ENCODE measurements at regions of chr10 and their contacts with region 1.

Region 1: GRCh38 chr10:3043512-3044368 is 23.6 kb upstream of the PFKP start:
- DNase-seq: peak in 6 of 9 donors; percentile 15 to 51 (median 22)
- ATAC-seq: peak; percentile 72
- H3K4me3 ChIP-seq: no peak overlapping the region
- H3K4me3 Mint-ChIP-seq: no peak overlapping the region
- H3K27ac ChIP-seq: no peak overlapping the region
- H3K27ac Mint-ChIP-seq: peak overlapping the region in 1 of 9 donors; percentile 48
- H3K4me1 ChIP-seq: no peaks in the 10 kb centered on the region
- H3K4me1 Mint-ChIP-seq: peaks cover 0 to 7% (median 4%) of the 10 kb centered on the region in 7 donors
- H3K27me3 ChIP-seq: no peaks in the 10 kb centered on the region
- H3K27me3 Mint-ChIP-seq: peaks cover 8 to 16% (median 10%) of the 10 kb centered on the region in 5 donors

Region 2: GRCh38 chr10:1142596-1142995 is 1901.1 kb before region 1 on chr10:
- CTCF ChIA-PET with region 1: no interaction called
- POLR2A ChIA-PET with region 1: no interaction called
- intact Hi-C with region 1: loop called in 1 of 2 experiments (anchors 10 kb)
- DNase-seq: peak in 2 of 9 donors; percentile 17 to 19
- ATAC-seq: no peak
- H3K4me3 ChIP-seq: no peak overlapping the region
- H3K4me3 Mint-ChIP-seq: no peak overlapping the region
- H3K27ac ChIP-seq: no peak overlapping the region
- H3K27ac Mint-ChIP-seq: no peak overlapping the region
- H3K4me1 ChIP-seq: no peaks in the 10 kb centered on the region
- H3K4me1 Mint-ChIP-seq: no peaks in the 10 kb centered on the region
- H3K27me3 ChIP-seq: no peaks in the 10 kb centered on the region
- H3K27me3 Mint-ChIP-seq: peaks cover 7 to 40% (median 16%) of the 10 kb centered on the region in 5 donors

Region 3: DNA sequence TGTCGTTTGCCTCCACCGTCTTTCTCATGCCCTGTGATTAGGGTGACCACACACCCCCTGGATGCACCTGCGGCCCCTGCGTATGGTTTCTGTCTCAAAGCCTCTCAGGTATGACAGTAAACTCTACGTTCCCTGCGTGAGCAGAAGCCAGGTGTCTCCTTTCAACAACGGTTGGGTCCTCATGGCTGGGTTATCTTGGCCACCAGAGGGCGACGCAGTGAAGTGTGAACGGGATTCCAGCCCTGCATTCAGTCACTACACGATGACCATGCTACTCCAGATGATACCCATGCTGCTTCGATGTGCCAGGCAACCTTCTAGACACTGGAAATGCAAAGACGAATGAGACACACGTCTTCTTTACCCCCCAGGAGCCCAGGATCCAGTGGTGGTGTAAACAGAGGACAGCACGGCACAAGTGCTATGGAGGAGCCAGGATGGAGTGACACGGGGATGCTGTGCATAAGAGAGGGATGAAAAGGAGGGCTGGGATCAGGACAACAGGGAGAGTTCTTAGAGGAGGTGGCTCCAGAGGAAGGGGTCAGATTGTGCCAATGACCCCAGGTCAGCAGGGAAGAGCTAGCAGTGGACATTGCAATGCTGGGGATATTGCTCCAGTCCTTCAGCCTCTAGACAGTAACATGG is 204.5 kb before region 1 on chr10:
- CTCF ChIA-PET with region 1: no interaction called
- POLR2A ChIA-PET with region 1: no interaction called
- intact Hi-C with region 1: loop called in 1 of 2 experiments (anchors 2 kb)
- DNase-seq: peak in 3 of 9 donors; percentile 0 to 28 (median 4)
- ATAC-seq: no peak
- H3K4me3 ChIP-seq: no peak overlapping the region
- H3K4me3 Mint-ChIP-seq: no peak overlapping the region
- H3K27ac ChIP-seq: no peak overlapping the region
- H3K27ac Mint-ChIP-seq: peak overlapping the region in 1 of 9 donors; percentile 72
- H3K4me1 ChIP-seq: no peaks in the 10 kb centered on the region
- H3K4me1 Mint-ChIP-seq: peaks cover 0 to 4% (median 0%) of the 10 kb centered on the region in 7 donors
- H3K27me3 ChIP-seq: no peaks in the 10 kb centered on the region
- H3K27me3 Mint-ChIP-seq: peaks cover 0 to 37% (median 25%) of the 10 kb centered on the region in 5 donors

Region 4: DNA sequence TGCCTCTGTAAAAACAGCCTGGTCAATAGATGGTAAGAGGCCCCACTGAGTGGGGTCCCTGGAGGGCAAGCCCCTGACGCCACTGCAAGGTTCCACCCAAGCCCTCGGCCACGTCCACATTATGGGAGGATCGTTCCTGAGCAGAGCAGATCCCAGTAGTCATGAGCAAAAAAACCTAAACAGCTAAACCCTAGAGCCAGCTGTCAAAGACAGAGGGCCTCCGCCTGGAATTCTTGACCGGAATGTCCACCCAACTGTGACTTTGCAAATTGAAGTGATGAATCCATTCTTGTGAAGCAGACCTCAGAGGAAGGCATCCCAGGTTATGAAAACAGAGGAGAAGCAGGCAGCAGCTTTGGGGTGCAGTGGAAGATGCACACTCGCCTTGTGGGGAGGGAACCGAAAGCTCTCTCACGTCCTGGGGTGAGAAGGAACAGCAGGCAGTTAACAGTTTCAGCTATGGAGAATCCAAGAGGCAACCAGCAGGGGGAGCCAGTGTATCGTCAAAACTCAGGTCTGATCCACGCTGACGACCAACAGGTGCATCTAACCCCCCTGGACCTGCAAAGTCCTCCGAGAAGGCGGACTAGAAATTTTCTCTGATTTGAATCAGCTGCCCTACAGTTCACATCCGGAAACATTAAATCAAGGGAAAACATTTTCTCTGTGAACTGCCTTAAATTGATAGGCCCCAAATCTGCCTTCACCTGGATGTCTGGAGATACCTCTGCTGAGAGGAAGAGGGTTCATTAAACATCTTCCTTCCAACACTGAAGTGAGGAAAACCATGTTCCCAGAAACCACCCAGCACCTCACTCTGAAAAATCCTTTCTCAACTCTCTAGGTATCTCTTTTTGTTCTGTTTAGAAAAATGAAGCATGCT is 115.5 kb before region 1 on chr10:
- CTCF ChIA-PET with region 1: no interaction called
- POLR2A ChIA-PET with region 1: no interaction called
- intact Hi-C with region 1: loop called (anchors 1 kb)
- DNase-seq: peak in 6 of 9 donors; percentile 7 to 73 (median 22)
- ATAC-seq: peak; percentile 61
- H3K4me3 ChIP-seq: no peak overlapping the region
- H3K4me3 Mint-ChIP-seq: peak overlapping the region in 1 of 10 donors; percentile 1
- H3K27ac ChIP-seq: no peak overlapping the region
- H3K27ac Mint-ChIP-seq: peak overlapping the region in 1 of 9 donors; percentile 28
- H3K4me1 ChIP-seq: no peaks in the 10 kb centered on the region
- H3K4me1 Mint-ChIP-seq: peaks cover 0 to 14% (median 11%) of the 10 kb centered on the region in 7 donors
- H3K27me3 ChIP-seq: no peaks in the 10 kb centered on the region
- H3K27me3 Mint-ChIP-seq: peaks cover 11 to 32% (median 20%) of the 10 kb centered on the region in 5 donors

Region 5: GRCh38 chr10:3068201-3068967 is 24.6 kb after region 1 on chr10:
- CTCF ChIA-PET with region 1: no interaction called
- POLR2A ChIA-PET with region 1: no interaction called
- intact Hi-C with region 1: no loop called
- DNase-seq: peak; percentile 26 to 76 (median 49)
- ATAC-seq: peak; percentile 61
- H3K4me3 ChIP-seq: peak overlapping the region; percentile 87
- H3K4me3 Mint-ChIP-seq: peak overlapping the region; percentile 80 to 98 (median 89)
- H3K27ac ChIP-seq: peak overlapping the region; percentile 70
- H3K27ac Mint-ChIP-seq: peak overlapping the region; percentile 8 to 90 (median 70)
- H3K4me1 ChIP-seq: peaks cover 8% of the 10 kb centered on the region in 2 donors
- H3K4me1 Mint-ChIP-seq: peaks cover 25 to 40% (median 34%) of the 10 kb centered on the region in 7 donors
- H3K27me3 ChIP-seq: no peaks in the 10 kb centered on the region
- H3K27me3 Mint-ChIP-seq: peaks cover 0 to 16% (median 0%) of the 10 kb centered on the region in 5 donors

Region 6: DNA sequence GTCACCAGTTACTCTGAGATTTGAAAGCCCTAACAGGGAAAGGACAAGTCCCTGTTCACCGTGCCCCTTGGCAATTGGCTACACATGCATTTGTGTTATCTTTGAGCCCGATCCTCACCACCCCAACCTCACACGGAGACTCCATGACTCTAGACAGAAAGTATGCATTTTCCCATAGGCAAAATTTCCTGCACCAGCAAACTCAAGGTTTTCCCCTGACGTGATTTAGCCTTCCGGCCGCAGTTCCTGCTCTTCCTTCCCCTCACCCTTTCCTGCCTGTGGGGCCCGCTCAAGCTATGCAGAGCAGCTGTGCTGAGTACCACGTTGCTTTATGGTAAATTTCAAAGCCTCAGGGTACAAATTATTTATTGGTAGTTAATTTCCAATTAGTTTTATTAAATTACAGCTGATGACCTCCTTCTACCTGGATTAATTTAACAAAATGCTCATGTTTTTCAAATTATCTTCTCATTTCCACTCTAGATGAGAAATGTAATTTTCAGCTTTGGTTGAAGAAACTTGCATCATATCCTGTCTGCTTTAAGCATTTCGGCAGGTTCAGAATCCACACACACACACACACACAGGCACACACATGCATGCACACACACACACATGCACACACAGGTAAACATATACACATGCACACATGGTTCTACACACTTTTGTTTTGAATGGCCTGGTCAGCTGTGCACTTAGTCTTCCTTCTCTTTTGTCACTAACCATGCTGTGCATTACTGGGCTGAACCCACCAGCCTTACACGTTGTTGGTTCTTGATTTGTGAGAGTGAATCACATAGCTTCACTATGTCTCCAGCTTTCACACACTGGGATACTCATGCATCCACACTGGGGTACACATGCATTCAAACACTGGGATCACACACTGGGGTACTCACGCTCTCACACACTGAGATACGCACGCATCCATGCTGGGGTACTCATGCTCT is 411.9 kb after region 1 on chr10:
- CTCF ChIA-PET with region 1: no interaction called
- POLR2A ChIA-PET with region 1: no interaction called
- intact Hi-C with region 1: no loop called
- DNase-seq: peak in 5 of 9 donors; percentile 13 to 37 (median 14)
- ATAC-seq: no peak
- H3K4me3 ChIP-seq: no peak overlapping the region
- H3K4me3 Mint-ChIP-seq: peak overlapping the region in 9 of 10 donors; percentile 12 to 71 (median 41)
- H3K27ac ChIP-seq: no peak overlapping the region
- H3K27ac Mint-ChIP-seq: peak overlapping the region; percentile 18 to 95 (median 87)
- H3K4me1 ChIP-seq: peaks cover 0 to 38% of the 10 kb centered on the region in 2 donors
- H3K4me1 Mint-ChIP-seq: peaks cover 7 to 57% (median 36%) of the 10 kb centered on the region in 7 donors
- H3K27me3 ChIP-seq: no peaks in the 10 kb centered on the region
- H3K27me3 Mint-ChIP-seq: peaks cover 0 to 11% (median 0%) of the 10 kb centered on the region in 5 donors

Measured in naive thymus-derived CD4-positive, alpha-beta T cell (primary cell).